Cardiac septum (tissue), 1 donor: ENCODE measurements at regions of chr1 and their contacts with region 1.

Region 1: DNA sequence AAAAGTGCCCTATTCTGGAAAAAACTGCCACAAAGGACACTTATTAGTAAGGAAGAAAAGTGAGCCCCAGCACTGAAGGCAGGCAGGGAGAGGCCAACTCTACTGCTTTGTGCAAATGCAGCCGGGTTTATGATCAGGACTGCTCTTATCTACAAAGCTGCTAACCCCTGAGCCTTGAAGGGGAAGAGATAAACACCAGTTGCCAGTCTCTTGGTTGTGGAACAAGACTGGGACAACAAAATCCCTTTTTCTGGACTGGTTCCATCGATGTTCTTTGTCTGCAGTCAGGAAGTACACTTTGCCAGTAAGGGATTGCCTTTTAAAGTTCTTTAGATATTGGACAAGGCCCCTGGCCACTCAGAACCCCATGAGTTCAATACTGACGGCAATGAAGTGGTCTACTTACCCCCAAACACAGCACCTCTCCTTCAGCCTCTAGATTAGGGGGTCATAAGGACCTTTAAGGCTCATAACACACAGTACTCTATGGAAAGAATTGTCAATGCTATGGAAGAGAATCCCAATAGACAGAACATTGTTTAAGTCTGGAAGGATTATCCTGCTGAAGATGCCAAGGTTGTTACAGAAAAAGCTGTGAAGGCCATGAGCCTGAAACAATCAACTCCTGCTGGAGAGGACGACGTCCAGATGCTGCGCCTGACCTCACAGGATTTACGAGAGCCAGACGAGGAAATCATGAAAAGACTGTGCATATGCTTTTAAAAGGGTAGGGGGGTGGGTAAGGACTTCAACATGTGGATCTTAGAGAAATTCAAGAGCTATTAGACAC is 43.6 kb downstream of the GNB1 start:
- DNase-seq: no peak

Region 2: GRCh38 chr1:1144122-1144842 is 703.0 kb before region 1 on chr1:
- intact Hi-C with region 1: no loop called
- DNase-seq: no peak

Region 3: DNA sequence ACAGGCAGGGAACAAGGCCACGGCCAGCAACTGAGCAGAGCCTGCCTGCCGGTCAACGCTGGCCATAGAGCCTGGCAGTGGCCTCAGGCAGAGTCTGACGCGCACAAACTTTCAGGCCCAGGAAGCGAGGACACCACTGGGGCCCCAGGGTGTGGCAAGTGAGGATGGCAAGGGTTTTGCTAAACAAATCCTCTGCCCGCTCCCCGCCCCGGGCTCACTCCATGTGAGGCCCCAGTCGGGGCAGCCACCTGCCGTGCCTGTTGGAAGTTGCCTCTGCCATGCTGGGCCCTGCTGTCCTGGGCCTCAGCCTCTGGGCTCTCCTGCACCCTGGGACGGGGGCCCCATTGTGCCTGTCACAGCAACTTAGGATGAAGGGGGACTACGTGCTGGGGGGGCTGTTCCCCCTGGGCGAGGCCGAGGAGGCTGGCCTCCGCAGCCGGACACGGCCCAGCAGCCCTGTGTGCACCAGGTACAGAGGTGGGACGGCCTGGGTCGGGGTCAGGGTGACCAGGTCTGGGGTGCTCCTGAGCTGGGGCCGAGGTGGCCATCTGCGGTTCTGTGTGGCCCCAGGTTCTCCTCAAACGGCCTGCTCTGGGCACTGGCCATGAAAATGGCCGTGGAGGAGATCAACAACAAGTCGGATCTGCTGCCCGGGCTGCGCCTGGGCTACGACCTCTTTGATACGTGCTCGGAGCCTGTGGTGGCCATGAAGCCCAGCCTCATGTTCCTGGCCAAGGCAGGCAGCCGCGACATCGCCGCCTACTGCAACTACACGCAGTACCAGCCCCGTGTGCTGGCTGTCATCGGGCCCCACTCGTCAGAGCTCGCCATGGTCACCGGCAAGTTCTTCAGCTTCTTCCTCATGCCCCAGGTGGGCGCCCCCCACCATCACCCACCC is 515.9 kb before region 1 on chr1 and contains the start of gene TAS1R3:
- intact Hi-C with region 1: no loop called
- DNase-seq: no peak
- total RNA-seq, gene TAS1R3: 0.62 TPM

Region 4: GRCh38 chr1:1794999-1795398 is 52.3 kb before region 1 on chr1:
- intact Hi-C with region 1: loop called (anchors 5 kb)
- DNase-seq: no peak

Region 5: DNA sequence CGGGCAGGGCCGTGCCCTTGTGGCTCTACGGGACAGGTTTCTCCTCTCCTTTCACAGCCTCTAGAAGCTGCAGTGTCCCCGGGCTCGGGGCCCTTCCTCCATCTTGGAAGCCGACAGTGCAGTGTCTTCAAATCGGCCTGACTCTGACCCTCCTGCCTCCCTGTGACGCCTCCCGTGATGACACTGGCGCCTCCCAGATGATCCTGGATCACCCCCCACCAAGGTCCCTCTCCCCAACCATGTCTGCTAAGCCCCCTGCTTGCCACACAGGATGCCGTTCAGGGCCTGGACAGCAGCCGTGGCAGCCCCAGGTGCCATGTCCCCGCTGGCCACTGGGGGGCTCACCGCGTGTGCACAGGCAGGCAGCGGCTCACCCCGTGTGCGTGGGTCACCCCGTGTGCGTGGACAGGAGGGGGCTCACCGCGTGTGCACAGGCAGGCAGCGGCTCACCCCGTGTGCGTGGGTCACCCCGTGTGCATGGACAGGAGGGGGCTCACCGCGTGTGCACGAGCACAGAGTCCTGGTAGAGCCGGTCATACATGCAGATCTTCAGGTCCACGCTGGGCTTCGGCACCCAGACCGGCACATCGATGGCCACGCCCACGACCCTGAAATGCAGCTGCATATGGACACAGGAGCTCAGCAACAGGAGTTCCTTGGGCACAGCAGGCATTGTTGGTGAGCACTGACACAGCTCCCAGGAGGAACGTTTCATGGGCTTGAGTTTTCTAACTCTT is 96.7 kb after region 1 on chr1:
- intact Hi-C with region 1: no loop called
- DNase-seq: no peak

Region 6: DNA sequence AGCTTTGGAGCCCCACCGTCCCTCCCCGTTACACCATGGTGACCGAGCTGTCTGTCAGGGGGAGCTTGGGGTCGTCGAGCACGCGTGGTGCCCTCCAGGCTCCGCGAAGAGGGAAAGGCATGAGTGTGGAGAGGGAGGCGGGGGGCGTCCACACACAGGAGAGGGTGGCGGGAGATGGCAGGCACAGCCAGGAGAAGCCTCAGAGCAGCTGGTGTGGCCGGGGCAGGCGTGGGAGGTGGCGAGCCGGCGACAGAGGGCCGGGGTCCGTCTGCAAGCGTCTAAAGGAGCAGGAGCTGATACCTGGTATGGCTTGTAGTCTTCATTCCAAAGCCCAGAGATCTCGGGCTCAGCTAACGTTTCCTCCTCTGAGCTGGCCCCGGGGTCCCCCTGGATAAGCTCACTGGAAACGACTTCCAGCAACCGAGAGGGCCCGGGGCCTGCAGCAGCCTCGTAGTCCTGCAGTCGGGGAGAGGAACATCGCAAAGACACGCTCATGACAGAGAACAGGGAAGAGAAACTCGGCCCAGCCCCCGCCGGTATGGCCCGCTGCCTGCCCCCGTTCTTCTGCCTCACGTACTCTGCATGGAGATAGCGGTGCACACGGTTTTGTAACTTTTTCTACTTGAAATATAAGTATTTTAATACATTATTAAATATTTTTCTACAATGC is 119.0 kb after region 1 on chr1:
- intact Hi-C with region 1: no loop called
- DNase-seq: no peak